Keratinocyte (primary cell): ENCODE measurements at regions of chr9 and their contacts with region 1.

Region 1: GRCh38 chr9:111161015-111161415 is 122.7 kb upstream of the LPAR1 start:
- DNase-seq: no peak
- H3K4me3 ChIP-seq: no peak overlapping the region
- H3K27ac ChIP-seq: no peak overlapping the region
- H3K4me1 ChIP-seq: no peaks in the 10 kb centered on the region
- H3K27me3 ChIP-seq: no peaks in the 10 kb centered on the region
- CTCF ChIP-seq: no peak

Region 2: DNA sequence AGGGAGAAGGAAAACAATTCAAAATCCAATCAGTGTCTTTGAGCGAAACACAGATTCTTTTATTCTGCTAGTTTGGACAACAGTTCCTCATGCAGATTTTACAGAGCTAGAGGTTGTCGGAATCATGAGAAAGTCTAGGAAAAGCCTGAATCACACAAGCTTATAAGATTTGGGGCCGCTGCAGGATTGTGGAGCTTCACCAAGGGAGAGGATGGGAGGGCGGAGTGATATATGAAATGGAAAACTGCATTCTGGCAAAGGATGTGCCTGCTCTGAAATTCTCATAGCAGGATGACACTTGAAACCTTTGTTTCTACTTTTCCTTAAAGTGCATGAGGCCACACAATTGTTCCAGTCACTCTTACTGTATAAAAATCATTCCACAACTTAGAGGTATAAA is 34.8 kb after region 1 on chr9:
- dilution Hi-C with region 1: loop called (anchors 5 kb)
- DNase-seq: no peak
- H3K4me3 ChIP-seq: no peak overlapping the region
- H3K27ac ChIP-seq: no peak overlapping the region
- H3K4me1 ChIP-seq: no peaks in the 10 kb centered on the region
- H3K27me3 ChIP-seq: no peaks in the 10 kb centered on the region
- CTCF ChIP-seq: no peak

Region 3: GRCh38 chr9:111362526-111362925 is 201.5 kb after region 1 on chr9:
- dilution Hi-C with region 1: no loop called
- DNase-seq: no peak
- H3K4me3 ChIP-seq: no peak overlapping the region
- H3K27ac ChIP-seq: no peak overlapping the region
- H3K4me1 ChIP-seq: no peaks in the 10 kb centered on the region
- H3K27me3 ChIP-seq: no peaks in the 10 kb centered on the region
- CTCF ChIP-seq: no peak